Transverse colon (tissue), 4 donors: ENCODE measurements at regions of chr11 and their contacts with region 1.

Region 1: DNA sequence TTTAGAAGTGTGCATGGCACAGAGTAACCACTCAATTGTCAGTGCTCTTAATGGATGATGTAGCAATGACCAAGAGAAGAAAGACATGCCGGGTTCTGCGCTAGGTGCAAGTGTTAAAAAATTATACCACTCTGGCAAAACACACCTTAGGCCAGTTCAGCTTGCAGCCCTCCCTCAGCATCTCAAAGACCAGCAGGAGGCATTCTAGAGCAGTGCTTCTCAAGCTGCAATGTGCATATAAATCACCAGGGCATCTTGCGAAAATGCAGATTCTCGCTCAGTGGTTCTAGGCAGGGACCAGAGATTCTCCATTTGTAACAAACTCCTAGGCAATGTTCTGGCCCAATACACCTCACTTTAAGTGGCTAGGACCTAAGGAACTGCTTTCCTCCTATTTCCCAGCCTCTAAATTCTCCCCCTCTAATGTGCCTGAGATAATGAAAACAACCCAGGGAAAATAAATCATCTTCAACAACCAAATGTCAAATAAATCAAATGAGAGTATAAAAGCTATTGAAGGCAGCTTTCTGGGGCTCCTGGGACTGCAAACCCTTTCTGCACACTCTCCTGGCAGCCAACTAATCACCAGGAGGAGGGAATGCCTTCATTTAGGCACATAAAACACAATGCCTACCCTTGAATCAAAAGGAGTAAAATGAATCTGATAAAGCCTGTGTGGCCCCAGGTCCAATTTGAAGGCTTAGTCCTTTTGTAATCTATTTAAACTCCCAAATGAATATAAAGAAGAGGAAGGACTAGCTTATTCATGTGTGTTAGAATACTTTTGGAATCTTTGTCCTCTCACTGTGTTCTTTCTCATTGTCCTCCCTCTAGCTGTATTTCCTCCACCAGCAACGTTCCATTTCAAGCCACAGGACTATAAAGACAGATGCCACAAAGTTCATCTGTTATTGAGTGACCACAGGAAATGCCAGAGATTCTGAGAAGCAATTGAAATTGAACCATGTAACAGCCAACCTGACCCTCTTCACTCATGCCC is 337.0 kb upstream of the API5 start:
- DNase-seq: no peak
- H3K4me3 ChIP-seq: no peak overlapping the region
- H3K27ac ChIP-seq: no peak overlapping the region
- H3K4me1 ChIP-seq: no peaks in the 10 kb centered on the region
- H3K27me3 ChIP-seq: no peaks in the 10 kb centered on the region
- CTCF ChIP-seq: peak in 1 of 5 experiments; percentile 8
- EP300 ChIP-seq: no peak
- POLR2A ChIP-seq: no peak

Region 2: GRCh38 chr11:41845066-41845465 is 1129.7 kb before region 1 on chr11:
- in situ Hi-C with region 1: no loop called
- intact Hi-C with region 1: loop called (anchors 5 kb)
- DNase-seq: no peak
- H3K4me3 ChIP-seq: no peak overlapping the region
- H3K27ac ChIP-seq: no peak overlapping the region
- H3K4me1 ChIP-seq: no peaks in the 10 kb centered on the region
- H3K27me3 ChIP-seq: no peaks in the 10 kb centered on the region
- CTCF ChIP-seq: no peak
- EP300 ChIP-seq: no peak
- POLR2A ChIP-seq: no peak

Region 3: GRCh38 chr11:42913731-42914130 is 61.1 kb before region 1 on chr11:
- in situ Hi-C with region 1: no loop called
- intact Hi-C with region 1: no loop called
- DNase-seq: no peak
- H3K4me3 ChIP-seq: no peak overlapping the region
- H3K27ac ChIP-seq: no peak overlapping the region
- H3K4me1 ChIP-seq: no peaks in the 10 kb centered on the region
- H3K27me3 ChIP-seq: no peaks in the 10 kb centered on the region
- CTCF ChIP-seq: no peak
- EP300 ChIP-seq: no peak
- POLR2A ChIP-seq: no peak

Region 4: GRCh38 chr11:43010042-43010441 is 35.2 kb after region 1 on chr11:
- in situ Hi-C with region 1: no loop called
- intact Hi-C with region 1: no loop called
- DNase-seq: no peak
- H3K4me3 ChIP-seq: no peak overlapping the region
- H3K27ac ChIP-seq: no peak overlapping the region
- H3K4me1 ChIP-seq: no peaks in the 10 kb centered on the region
- H3K27me3 ChIP-seq: no peaks in the 10 kb centered on the region
- CTCF ChIP-seq: no peak
- EP300 ChIP-seq: no peak
- POLR2A ChIP-seq: no peak